ENCODE measurements at regions of chr7 and their contacts with region 1.

Region 1: GRCh38 chr7:44490351-44491200 is at the start of gene NUDCD3:
- DNase-seq: peak; percentile 87

Region 2: GRCh38 chr7:43747309-43748105 is 743.1 kb before region 1 on chr7:
- in situ Hi-C with region 1: no loop called
- DNase-seq: no peak

Region 3: DNA sequence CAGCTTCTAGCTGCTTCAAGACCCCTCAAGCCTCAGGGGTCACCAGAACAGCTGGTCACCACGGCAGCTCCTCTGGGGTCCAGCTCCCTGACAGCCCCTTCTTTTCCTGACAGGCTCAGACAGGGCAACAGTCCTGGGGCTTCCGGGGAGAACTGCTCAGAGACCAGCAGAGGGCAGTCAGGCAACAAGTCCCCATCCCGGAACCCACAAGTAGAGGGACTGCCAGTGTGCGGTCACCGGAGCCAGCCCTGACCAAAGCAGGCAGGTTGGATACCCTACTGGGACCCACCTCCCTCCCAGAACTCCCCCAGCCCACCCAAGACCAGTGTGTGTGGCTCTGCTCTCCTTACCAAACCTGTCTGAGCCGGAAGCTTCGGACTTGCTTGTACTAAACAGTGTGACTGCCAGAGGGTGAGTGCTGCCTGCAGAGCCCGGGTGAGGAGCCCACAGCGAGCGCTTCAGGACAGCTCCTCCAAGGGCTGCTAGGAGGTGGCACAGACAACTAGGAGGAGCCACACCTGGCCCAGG is 249.5 kb before region 1 on chr7:
- in situ Hi-C with region 1: loop called (anchors 25 kb)
- DNase-seq: peak; percentile 78

Region 4: DNA sequence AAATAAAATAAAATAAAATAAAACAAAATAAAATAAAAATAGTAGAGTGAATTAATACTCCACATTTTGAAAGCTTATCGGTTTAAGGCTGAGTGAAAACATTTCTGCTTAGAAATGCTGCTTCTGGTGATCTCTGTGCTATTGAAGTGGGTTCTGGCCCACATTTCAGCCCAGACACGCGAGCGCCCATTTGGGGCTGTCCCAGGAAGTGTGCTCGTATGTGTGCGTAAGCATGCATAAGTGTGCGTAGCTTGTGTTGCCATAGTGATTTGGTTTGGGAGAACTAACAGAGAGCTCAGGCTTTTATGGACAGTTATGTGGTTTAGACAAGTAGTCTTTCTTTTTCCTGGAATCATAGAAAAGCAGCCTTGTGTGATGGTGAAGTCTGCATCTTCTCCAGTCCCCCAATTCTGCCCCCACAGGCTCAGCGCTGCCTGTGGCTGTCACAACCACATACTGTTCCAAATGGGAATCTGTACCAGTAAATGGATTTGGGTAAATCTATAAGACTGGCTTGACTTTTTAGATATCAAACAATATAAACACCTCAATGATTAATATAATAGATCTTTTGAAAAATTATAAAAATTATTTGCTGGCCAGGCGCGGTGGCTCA is 424.5 kb after region 1 on chr7:
- in situ Hi-C with region 1: no loop called
- DNase-seq: peak; percentile 48